ENCODE measurements at regions of chr3 and their contacts with region 1.

Region 1: DNA sequence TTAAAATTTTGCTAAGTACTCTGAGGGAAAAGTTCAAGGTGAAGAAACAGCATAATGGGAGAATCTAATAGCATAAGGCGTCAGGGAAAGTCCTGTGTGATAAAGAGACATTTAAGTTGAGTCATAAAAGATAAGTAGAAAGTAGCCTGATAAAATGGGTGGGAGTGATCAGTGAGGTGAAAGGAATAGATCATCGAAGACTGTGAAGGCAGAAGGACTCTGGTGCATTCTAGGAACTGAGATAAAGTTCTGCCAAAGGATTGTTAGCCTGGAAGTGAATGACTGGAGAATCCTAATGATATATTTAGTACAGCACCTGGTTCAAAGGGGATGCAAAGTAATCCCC is 149.9 kb downstream of the CFAP20DC start:
- DNase-seq: no peak
- H3K4me3 ChIP-seq: no peak overlapping the region
- H3K27ac ChIP-seq: no peak overlapping the region
- H3K4me1 ChIP-seq: no peaks in the 10 kb centered on the region
- H3K27me3 ChIP-seq: no peaks in the 10 kb centered on the region
- CTCF ChIP-seq: no peak
- EP300 ChIP-seq: no peak
- POLR2A ChIP-seq: no peak

Region 2: GRCh38 chr3:58824285-58824684 is 75.6 kb before region 1 on chr3:
- in situ Hi-C with region 1: loop called in 1 of 4 experiments (anchors 25 kb)
- intact Hi-C with region 1: no loop called
- DNase-seq: peak; percentile 79
- H3K4me3 ChIP-seq: peak overlapping the region in 1 of 4 donors; percentile 25
- H3K27ac ChIP-seq: no peak overlapping the region
- H3K4me1 ChIP-seq: peaks cover 0 to 8% (median 2%) of the 10 kb centered on the region in 4 donors
- H3K27me3 ChIP-seq: no peaks in the 10 kb centered on the region
- CTCF ChIP-seq: peak; percentile 44 to 58 (median 52)
- EP300 ChIP-seq: no peak
- POLR2A ChIP-seq: no peak

Region 3: DNA sequence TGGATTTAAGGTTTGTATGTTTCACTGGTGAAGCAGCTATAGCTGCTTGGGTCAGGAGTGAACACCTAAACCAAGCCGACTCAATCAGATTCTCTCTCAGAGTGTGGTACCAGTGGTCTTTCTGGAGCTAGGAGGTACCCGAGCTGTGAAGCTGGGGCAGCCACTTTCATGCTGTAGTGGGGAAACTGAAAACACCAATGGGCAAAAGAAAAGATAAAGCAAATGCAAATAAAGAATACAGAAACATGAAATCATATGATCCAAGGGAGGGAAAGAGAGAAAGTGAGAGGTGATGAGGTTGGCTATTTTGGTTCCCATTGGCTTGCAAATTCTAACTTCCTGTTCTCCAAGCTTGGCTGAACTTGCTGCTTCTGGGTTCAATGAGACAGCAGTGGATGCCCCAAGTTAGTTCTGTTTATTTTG is 362.2 kb after region 1 on chr3:
- in situ Hi-C with region 1: no loop called
- intact Hi-C with region 1: no loop called
- DNase-seq: no peak
- H3K4me3 ChIP-seq: no peak overlapping the region
- H3K27ac ChIP-seq: no peak overlapping the region
- H3K4me1 ChIP-seq: no peaks in the 10 kb centered on the region
- H3K27me3 ChIP-seq: no peaks in the 10 kb centered on the region
- CTCF ChIP-seq: no peak
- EP300 ChIP-seq: no peak
- POLR2A ChIP-seq: no peak